ENCODE measurements at regions of chrX and their contacts with region 1.

Region 1: GRCh38 chrX:14029425-14030173 is at the start of gene GEMIN8:
- DNase-seq: peak; percentile 78 to 96
- H3K4me3 ChIP-seq: peak within 1 kb of the TSS; percentile 36
- CTCF ChIP-seq: no peak
- POLR2A ChIP-seq: no peak
- total RNA-seq, gene GEMIN8: 12.0 to 18.6 (median 16.3) TPM

Region 2: GRCh38 chrX:12722314-12722713 is 1307.3 kb before region 1 on chrX:
- intact Hi-C with region 1: no loop called
- DNase-seq: no peak
- H3K4me3 ChIP-seq: no peak overlapping the region
- CTCF ChIP-seq: no peak
- POLR2A ChIP-seq: no peak

Region 3: DNA sequence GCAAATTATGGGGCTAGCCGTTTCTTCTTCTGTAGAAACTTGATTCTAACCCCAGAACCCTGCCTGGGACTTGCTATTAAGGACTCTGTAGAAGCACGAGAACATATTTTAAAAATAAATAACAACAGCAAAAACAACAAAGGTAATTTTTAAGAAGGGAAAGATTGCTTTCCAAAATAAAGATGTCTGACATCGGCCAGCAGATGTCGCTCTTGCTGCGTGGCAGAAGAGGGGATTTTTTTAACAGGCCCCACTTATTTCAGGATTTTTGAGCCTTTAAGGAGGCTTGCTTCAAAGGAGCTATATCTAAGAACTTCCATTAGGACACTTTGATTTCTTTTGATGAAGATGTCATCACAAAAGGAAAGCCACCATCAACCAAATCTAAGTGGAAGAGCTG is 523.0 kb before region 1 on chrX:
- intact Hi-C with region 1: loop called (anchors 5 kb)
- DNase-seq: no peak
- H3K4me3 ChIP-seq: no peak overlapping the region
- CTCF ChIP-seq: no peak
- POLR2A ChIP-seq: no peak

Region 4: GRCh38 chrX:13658602-13659001 is 371.0 kb before region 1 on chrX:
- intact Hi-C with region 1: loop called (anchors 5 kb)
- DNase-seq: no peak
- H3K4me3 ChIP-seq: no peak overlapping the region
- CTCF ChIP-seq: no peak
- POLR2A ChIP-seq: no peak

Region 5: DNA sequence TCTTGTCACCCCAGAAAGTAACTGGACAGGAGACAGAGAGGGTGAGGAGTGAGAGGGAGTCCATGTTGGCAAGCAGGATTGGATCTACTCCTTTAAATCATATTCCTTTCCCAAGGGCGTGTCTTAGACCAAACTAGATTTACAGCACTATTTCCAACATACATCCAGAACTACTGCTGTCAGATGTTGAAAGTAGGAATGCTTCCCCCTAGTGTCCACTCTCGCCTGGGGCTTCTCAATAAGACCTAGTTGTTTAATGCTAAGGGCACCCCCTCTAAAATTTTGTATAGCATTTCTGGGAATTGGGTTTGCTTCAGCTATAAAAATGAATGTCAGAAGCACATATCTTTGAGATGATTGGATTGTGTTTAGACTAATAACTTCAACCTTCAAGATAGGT is 281.8 kb before region 1 on chrX:
- intact Hi-C with region 1: loop called (anchors 5 kb)
- DNase-seq: no peak
- H3K4me3 ChIP-seq: no peak overlapping the region
- CTCF ChIP-seq: no peak
- POLR2A ChIP-seq: no peak